ENCODE measurements at regions of chr12 and their contacts with region 1.

Region 1: GRCh38 chr12:52307836-52308805 is 13.1 kb downstream of the KRT83 start:
- DNase-seq: peak; percentile 72
- ATAC-seq: peak; percentile 92
- H3K4me3 Mint-ChIP-seq: peak overlapping the region; percentile 68
- H3K27ac Mint-ChIP-seq: no peak overlapping the region
- H3K4me1 Mint-ChIP-seq: peaks cover 32% of the 10 kb centered on the region
- H3K27me3 Mint-ChIP-seq: peaks cover 62% of the 10 kb centered on the region

Region 2: GRCh38 chr12:52295663-52296062 is 12.5 kb before region 1 on chr12:
- CTCF ChIA-PET with region 1: interaction called, 15 read pairs
- POLR2A ChIA-PET with region 1: no interaction called
- DNase-seq: no peak
- ATAC-seq: no peak
- H3K4me3 Mint-ChIP-seq: no peak overlapping the region
- H3K27ac Mint-ChIP-seq: no peak overlapping the region
- H3K4me1 Mint-ChIP-seq: peaks cover 20% of the 10 kb centered on the region
- H3K27me3 Mint-ChIP-seq: peaks cover 64% of the 10 kb centered on the region